B cell (primary cell): ENCODE measurements at regions of chr7 and their contacts with region 1.

Region 1: GRCh38 chr7:134766779-134767519 is 12.5 kb upstream of the CALD1 start:
- DNase-seq: peak; percentile 83
- ATAC-seq: peak; percentile 93
- H3K4me3 ChIP-seq: no peak overlapping the region
- H3K4me3 Mint-ChIP-seq: peak overlapping the region; percentile 59
- H3K27ac ChIP-seq: peak overlapping the region; percentile 66 to 80
- H3K27ac Mint-ChIP-seq: peak overlapping the region; percentile 94
- H3K4me1 ChIP-seq: peaks cover 23% of the 10 kb centered on the region in 2 donors
- H3K4me1 Mint-ChIP-seq: peaks cover 29% of the 10 kb centered on the region
- H3K27me3 ChIP-seq: no peaks in the 10 kb centered on the region
- H3K27me3 Mint-ChIP-seq: no peaks in the 10 kb centered on the region
- CTCF ChIP-seq: no peak

Region 2: GRCh38 chr7:134750083-134751062 is 16.6 kb before region 1 on chr7:
- CTCF ChIA-PET with region 1: interaction called, 11 read pairs
- POLR2A ChIA-PET with region 1: no interaction called
- intact Hi-C with region 1: no loop called
- DNase-seq: peak; percentile 50
- ATAC-seq: peak; percentile 53
- H3K4me3 ChIP-seq: no peak overlapping the region
- H3K4me3 Mint-ChIP-seq: no peak overlapping the region
- H3K27ac ChIP-seq: no peak overlapping the region
- H3K27ac Mint-ChIP-seq: no peak overlapping the region
- H3K4me1 ChIP-seq: no peaks in the 10 kb centered on the region
- H3K4me1 Mint-ChIP-seq: no peaks in the 10 kb centered on the region
- H3K27me3 ChIP-seq: no peaks in the 10 kb centered on the region
- H3K27me3 Mint-ChIP-seq: peaks cover 4% of the 10 kb centered on the region
- CTCF ChIP-seq: peak; percentile 70